Ascending aorta (tissue), 2 donors: ENCODE measurements at regions of chr3 and their contacts with region 1.

Region 1: DNA sequence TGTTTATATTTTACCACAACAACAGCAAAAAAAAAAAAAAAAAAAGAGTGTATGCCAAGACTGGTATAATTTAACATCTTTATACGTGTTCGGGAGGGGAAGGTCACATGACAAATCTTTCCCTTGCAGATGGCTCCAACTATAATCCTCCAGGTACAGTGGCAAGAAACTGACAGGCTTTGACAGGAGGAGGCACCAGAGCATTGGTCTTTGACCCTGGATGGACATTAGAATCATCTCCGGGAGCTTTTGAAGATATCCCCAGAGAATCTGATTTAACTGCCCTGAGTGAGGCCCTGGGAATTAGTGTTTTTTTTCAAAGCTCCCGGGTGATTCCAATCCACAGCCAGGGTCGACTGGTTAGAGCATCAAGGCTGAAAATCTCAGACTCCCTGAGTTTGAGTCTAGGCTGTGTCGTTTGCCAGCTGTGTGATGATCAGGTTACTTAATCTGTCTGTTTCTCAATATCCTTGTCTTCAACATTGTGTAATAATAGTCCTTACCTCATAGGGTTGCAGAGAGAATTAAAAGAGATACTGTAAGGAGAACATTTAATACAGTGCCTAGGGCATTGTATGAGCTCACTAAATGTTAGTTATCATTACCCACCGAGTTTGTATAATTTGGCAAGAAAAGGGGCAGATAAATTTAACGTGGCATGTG is 8.9 kb upstream of the SEMA5B start:
- DNase-seq: peak in 1 of 2 donors; percentile 70
- H3K4me3 ChIP-seq: no peak overlapping the region
- H3K27ac ChIP-seq: peak overlapping the region; percentile 62 to 64
- H3K4me1 ChIP-seq: peaks cover 0 to 15% of the 10 kb centered on the region in 2 donors
- H3K27me3 ChIP-seq: no peaks in the 10 kb centered on the region
- CTCF ChIP-seq: no peak

Region 2: GRCh38 chr3:122730240-122730639 is 306.2 kb before region 1 on chr3:
- intact Hi-C with region 1: no loop called
- DNase-seq: no peak
- H3K4me3 ChIP-seq: no peak overlapping the region
- H3K27ac ChIP-seq: no peak overlapping the region
- H3K4me1 ChIP-seq: no peaks in the 10 kb centered on the region
- H3K27me3 ChIP-seq: no peaks in the 10 kb centered on the region
- CTCF ChIP-seq: no peak

Region 3: DNA sequence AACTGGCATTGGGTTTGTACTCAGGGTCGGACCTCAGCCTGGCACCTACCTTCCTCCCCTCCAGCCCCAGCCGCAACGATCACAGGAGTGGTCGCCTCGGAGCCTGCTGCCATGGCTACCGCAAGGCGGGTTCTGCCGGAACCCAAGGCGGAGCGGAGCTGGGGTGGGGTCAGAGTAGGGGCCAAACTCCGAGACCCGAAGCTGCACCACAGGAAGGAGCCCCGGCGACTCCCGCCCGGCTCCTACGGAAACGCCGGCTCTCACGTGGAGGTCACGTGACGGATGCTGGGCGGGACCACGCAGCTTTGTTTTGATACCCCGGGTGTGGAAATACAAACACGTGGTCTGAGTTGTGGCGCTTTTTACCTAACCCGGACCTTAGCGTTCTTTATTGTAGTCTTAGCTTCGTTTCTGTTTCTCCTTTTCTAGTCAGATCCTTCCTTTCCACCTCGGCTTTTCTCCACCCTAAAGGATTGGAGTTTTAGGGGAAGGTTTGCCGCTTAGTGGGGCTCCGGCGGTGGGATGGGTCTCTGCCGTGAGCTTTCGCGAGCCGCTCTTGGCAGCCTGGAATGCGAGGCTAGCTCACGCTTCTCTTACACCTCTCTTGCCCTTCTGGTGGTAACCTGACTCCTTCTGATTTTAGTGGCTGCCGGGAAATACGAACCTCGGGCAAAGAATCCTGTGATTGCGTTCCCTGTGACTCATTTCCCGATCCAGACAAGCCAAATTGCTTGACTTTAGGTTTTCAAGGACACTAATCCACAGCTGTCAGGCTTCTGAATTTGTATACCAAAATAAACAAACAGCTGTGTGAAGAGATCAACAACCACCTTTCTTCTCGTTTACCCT is 242.7 kb before region 1 on chr3 and contains the start of gene HSPBAP1:
- intact Hi-C with region 1: loop called (anchors 2 kb)
- DNase-seq: peak; percentile 74 to 96
- H3K4me3 ChIP-seq: peak within 1 kb of the TSS; percentile 89 to 98
- H3K27ac ChIP-seq: peak within 1 kb of the TSS; percentile 96 to 100
- H3K4me1 ChIP-seq: peaks cover 3 to 5% of the 10 kb centered on the region in 2 donors
- H3K27me3 ChIP-seq: no peaks in the 10 kb centered on the region
- CTCF ChIP-seq: no peak
- total RNA-seq, gene HSPBAP1: 2.4 TPM

Region 4: GRCh38 chr3:123066896-123067688 is 30.6 kb after region 1 on chr3 and contains the start of gene PDIA5:
- intact Hi-C with region 1: loop called (anchors 1 kb)
- DNase-seq: peak; percentile 67 to 96
- H3K4me3 ChIP-seq: peak within 1 kb of the TSS; percentile 86 to 92
- H3K27ac ChIP-seq: peak within 1 kb of the TSS; percentile 78 to 82
- H3K4me1 ChIP-seq: peaks cover 6 to 21% of the 10 kb centered on the region in 2 donors
- H3K27me3 ChIP-seq: no peaks in the 10 kb centered on the region
- CTCF ChIP-seq: no peak
- total RNA-seq, gene PDIA5: 21.3 TPM

Region 5: DNA sequence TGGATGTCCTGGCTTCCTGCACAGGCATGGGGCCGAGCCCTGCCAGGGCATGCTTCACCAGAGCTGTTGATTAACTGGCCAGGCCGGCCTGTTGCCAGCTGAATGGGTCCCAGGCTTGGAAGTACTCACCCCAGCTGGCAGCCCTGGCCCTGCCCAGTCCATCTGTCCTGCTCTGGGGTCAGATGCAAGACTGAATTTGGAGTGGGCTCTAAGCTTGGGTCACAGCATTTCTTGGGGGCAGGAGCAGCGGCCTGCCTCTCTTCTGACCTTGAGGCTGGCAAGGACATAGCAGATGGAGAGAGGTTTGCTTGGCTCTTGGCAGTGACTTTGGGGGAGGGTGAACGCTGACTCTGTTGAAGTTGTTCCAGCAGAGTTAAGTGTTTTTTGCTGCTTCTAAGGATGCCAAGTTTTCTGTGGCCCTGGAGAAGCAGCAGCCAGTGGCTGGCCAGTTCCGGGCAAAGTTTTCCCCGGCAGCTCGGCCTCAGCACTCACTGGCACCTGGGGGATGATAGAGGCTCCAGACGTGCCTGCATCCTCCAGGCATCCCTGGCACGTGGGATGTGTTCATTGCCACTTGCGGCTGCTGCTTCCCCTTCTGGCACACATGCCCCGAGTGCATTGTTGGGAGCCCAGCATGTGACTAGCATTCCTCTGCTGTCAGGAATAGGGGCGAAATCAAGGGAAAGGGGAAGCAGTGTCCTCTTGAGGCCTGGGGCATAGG is 53.3 kb after region 1 on chr3:
- intact Hi-C with region 1: loop called (anchors 5 kb)
- DNase-seq: peak in 1 of 2 donors; percentile 82
- H3K4me3 ChIP-seq: no peak overlapping the region
- H3K27ac ChIP-seq: peak overlapping the region; percentile 54 to 70
- H3K4me1 ChIP-seq: peaks cover 19 to 42% of the 10 kb centered on the region in 2 donors
- H3K27me3 ChIP-seq: no peaks in the 10 kb centered on the region
- CTCF ChIP-seq: no peak

Region 6: GRCh38 chr3:123194552-123194951 is 158.1 kb after region 1 on chr3:
- intact Hi-C with region 1: no loop called
- DNase-seq: no peak
- H3K4me3 ChIP-seq: no peak overlapping the region
- H3K27ac ChIP-seq: no peak overlapping the region
- H3K4me1 ChIP-seq: no peaks in the 10 kb centered on the region
- H3K27me3 ChIP-seq: no peaks in the 10 kb centered on the region
- CTCF ChIP-seq: no peak